Naive thymus-derived CD4-positive, alpha-beta T cell (primary cell): ENCODE measurements at regions of chr20 and their contacts with region 1.

Region 1: GRCh38 chr20:4038047-4038459 is 22.7 kb upstream of the RNF24 start:
- DNase-seq: peak; percentile 51 to 93 (median 89)
- ATAC-seq: peak; percentile 100
- H3K4me3 ChIP-seq: peak overlapping the region; percentile 34
- H3K4me3 Mint-ChIP-seq: peak overlapping the region; percentile 72 to 92 (median 84)
- H3K27ac ChIP-seq: peak overlapping the region; percentile 57
- H3K27ac Mint-ChIP-seq: peak overlapping the region; percentile 92 to 99 (median 95)
- H3K4me1 ChIP-seq: peaks cover 16 to 18% of the 10 kb centered on the region in 2 donors
- H3K4me1 Mint-ChIP-seq: peaks cover 10 to 27% (median 19%) of the 10 kb centered on the region in 7 donors
- H3K27me3 ChIP-seq: no peaks in the 10 kb centered on the region
- H3K27me3 Mint-ChIP-seq: no peaks in the 10 kb centered on the region

Region 2: DNA sequence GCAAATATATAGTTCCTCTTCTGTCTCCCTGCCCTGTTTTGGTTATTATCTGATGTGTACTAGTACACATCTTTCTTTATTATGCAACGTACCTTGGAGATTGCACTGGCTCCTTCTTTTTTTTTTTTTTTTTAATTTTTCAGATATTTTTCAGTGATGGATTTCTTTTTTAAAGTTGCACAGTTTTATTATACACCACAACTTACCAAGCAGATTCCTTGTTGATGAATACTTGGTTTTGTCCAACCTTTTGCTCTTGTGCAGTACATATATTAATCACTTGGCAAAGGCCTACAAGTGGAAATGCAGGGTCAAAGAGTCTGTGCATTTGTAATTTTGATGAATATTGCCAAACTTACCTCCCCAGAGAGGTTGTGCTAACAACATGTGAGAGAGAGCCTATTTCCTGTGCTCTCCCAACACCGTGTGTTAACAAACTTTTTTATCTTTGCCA is 27.4 kb after region 1 on chr20:
- CTCF ChIA-PET with region 1: no interaction called
- POLR2A ChIA-PET with region 1: interaction called, 3 read pairs
- intact Hi-C with region 1: loop called in 1 of 2 experiments (anchors 1 kb)
- DNase-seq: no peak
- ATAC-seq: no peak
- H3K4me3 ChIP-seq: no peak overlapping the region
- H3K4me3 Mint-ChIP-seq: no peak overlapping the region
- H3K27ac ChIP-seq: no peak overlapping the region
- H3K27ac Mint-ChIP-seq: peak overlapping the region in 5 of 9 donors; percentile 5 to 71 (median 35)
- H3K4me1 ChIP-seq: no peaks in the 10 kb centered on the region
- H3K4me1 Mint-ChIP-seq: peaks cover 12 to 57% (median 25%) of the 10 kb centered on the region in 7 donors
- H3K27me3 ChIP-seq: no peaks in the 10 kb centered on the region
- H3K27me3 Mint-ChIP-seq: no peaks in the 10 kb centered on the region

Region 3: GRCh38 chr20:4073852-4074741 is 36.0 kb after region 1 on chr20:
- CTCF ChIA-PET with region 1: no interaction called
- POLR2A ChIA-PET with region 1: interaction called, 11 read pairs
- intact Hi-C with region 1: no loop called
- DNase-seq: no peak
- ATAC-seq: no peak
- H3K4me3 ChIP-seq: no peak overlapping the region
- H3K4me3 Mint-ChIP-seq: no peak overlapping the region
- H3K27ac ChIP-seq: no peak overlapping the region
- H3K27ac Mint-ChIP-seq: peak overlapping the region in 1 of 9 donors; percentile 47
- H3K4me1 ChIP-seq: no peaks in the 10 kb centered on the region
- H3K4me1 Mint-ChIP-seq: peaks cover 9 to 34% (median 14%) of the 10 kb centered on the region in 7 donors
- H3K27me3 ChIP-seq: no peaks in the 10 kb centered on the region
- H3K27me3 Mint-ChIP-seq: peaks cover 0 to 17% (median 0%) of the 10 kb centered on the region in 5 donors

Region 4: DNA sequence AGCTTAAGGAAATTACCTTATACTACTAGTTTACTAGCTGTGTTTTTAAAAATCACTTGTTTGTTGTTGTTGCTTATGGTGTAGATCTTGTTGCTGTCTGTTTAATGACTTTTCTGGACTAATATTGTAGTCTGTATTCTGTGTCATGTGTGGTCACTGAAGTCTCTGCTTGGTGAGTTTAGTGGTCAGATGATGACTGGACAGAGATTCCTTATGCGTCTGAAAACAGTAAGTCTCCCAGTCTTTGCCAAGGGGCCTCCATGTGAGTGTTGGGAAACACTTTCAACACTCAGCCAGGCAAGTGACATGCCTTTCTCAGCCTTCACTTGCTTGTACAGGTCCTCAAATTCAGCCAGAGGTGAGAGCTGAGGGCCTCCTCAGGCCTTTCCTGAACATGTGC is 234.2 kb after region 1 on chr20:
- CTCF ChIA-PET with region 1: no interaction called
- POLR2A ChIA-PET with region 1: no interaction called
- intact Hi-C with region 1: no loop called
- DNase-seq: no peak
- ATAC-seq: no peak
- H3K4me3 ChIP-seq: no peak overlapping the region
- H3K4me3 Mint-ChIP-seq: no peak overlapping the region
- H3K27ac ChIP-seq: no peak overlapping the region
- H3K27ac Mint-ChIP-seq: no peak overlapping the region
- H3K4me1 ChIP-seq: no peaks in the 10 kb centered on the region
- H3K4me1 Mint-ChIP-seq: no peaks in the 10 kb centered on the region
- H3K27me3 ChIP-seq: no peaks in the 10 kb centered on the region
- H3K27me3 Mint-ChIP-seq: peaks cover 9 to 28% (median 13%) of the 10 kb centered on the region in 5 donors